BJ (cell line): ENCODE measurements at regions of chr6 and their contacts with region 1.

Region 1: DNA sequence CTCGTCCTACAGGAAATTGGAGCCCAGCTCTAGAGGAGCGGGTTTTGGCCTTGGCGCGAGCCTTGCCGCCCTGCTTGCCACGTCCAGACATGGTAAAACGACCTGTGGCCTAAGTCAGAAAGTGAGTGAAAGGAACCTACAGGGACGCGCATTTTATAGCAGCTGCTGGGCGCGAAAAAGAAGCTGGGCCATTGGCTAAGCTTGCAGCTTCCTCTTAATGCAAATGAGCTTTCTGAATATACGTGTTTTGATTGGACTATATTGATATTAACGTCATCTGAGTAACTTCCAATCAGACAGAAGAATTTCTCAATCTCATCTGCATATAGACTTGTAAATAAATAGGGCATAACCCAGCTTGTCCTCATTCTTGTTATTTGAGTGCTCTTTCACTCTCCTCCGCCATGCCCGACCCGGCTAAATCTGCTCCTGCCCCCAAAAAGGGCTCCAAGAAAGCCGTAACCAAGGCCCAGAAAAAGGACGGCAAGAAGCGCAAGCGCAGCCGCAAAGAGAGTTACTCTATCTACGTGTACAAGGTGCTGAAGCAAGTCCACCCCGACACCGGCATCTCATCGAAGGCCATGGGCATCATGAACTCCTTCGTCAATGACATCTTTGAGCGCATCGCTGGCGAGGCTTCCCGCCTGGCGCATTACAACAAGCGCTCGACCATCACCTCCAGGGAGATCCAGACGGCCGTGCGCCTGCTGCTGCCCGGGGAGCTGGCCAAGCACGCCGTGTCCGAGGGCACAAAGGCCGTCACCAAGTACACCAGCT is 18.9 kb downstream of the OR2B2 start:
- DNase-seq: peak; percentile 98
- H3K4me3 ChIP-seq: peak overlapping the region; percentile 70
- H3K27me3 ChIP-seq: no peaks in the 10 kb centered on the region
- CTCF ChIP-seq: no peak

Region 2: GRCh38 chr6:26045065-26045927 is 1848.0 kb before region 1 on chr6:
- CTCF ChIA-PET with region 1: no interaction called
- POLR2A ChIA-PET with region 1: interaction called, 11 read pairs
- DNase-seq: peak; percentile 87
- H3K4me3 ChIP-seq: peak overlapping the region; percentile 51
- H3K27me3 ChIP-seq: no peaks in the 10 kb centered on the region
- CTCF ChIP-seq: peak; percentile 30; the same call in 1 of the 2 replicates

Region 3: DNA sequence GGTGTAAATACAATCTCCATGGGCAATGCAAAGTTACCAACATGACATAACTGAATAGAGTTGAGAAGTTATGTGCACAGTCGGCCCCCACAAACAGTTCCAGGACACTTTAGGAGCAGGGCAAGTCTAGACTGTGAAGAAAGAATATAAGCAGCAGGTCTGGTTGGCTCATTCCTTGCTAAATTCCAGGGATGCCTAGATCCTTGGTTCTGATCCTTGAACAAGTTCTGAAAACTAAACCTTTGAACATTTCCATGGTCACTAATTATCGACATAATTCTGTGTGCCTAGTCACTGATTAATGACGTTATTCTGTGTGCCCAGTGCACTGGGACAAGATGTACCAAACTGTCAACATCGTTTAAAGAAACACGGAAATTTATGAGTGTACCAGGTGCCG is 432.5 kb before region 1 on chr6:
- CTCF ChIA-PET with region 1: no interaction called
- POLR2A ChIA-PET with region 1: no interaction called
- DNase-seq: no peak
- H3K4me3 ChIP-seq: no peak overlapping the region
- H3K27me3 ChIP-seq: no peaks in the 10 kb centered on the region
- CTCF ChIP-seq: no peak

Region 4: DNA sequence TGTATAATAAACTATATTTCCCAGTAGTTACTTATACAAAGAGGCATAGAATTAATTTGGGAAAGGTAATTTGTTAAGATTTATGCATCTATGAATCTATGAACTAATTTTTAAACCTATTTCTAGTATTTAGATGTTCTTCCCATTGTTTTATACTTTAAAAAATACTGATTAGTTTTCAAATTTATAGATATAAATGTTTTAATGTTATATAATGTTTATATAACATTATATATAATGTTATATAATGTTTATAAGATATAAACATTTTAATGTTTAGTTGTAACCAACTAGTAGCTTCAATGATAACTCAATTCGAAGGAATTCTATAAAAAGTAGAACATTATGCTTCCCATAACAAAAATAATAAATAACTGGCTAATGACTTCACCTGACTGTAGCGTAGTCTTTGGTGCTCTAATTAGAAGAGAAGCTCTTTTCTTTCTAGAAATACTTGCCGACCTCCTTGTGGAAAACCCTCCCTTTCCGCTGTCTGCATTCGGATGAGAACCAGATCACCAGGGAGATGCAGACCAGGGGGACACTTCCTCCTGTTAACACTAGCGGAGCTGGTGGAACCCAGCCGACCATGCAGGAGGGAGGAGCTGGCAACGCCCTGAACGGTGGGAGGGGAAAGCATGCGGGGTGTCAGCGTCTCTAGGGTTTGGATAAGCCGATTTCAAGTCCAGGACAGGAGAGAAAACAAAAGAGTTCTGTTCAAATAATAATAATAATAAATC is 139.4 kb before region 1 on chr6:
- CTCF ChIA-PET with region 1: interaction called, 10 read pairs
- POLR2A ChIA-PET with region 1: interaction called, 3 read pairs
- DNase-seq: peak; percentile 16
- H3K4me3 ChIP-seq: peak overlapping the region; percentile 44
- H3K27me3 ChIP-seq: peaks cover 3% of the 10 kb centered on the region
- CTCF ChIP-seq: peak; percentile 27; the same call in 1 of the 2 replicates

Region 5: GRCh38 chr6:27795697-27796494 is 97.4 kb before region 1 on chr6:
- CTCF ChIA-PET with region 1: interaction called, 43 read pairs
- POLR2A ChIA-PET with region 1: interaction called, 4 read pairs
- DNase-seq: peak; percentile 80
- H3K4me3 ChIP-seq: no peak overlapping the region
- H3K27me3 ChIP-seq: no peaks in the 10 kb centered on the region
- CTCF ChIP-seq: peak; percentile 75

Region 6: DNA sequence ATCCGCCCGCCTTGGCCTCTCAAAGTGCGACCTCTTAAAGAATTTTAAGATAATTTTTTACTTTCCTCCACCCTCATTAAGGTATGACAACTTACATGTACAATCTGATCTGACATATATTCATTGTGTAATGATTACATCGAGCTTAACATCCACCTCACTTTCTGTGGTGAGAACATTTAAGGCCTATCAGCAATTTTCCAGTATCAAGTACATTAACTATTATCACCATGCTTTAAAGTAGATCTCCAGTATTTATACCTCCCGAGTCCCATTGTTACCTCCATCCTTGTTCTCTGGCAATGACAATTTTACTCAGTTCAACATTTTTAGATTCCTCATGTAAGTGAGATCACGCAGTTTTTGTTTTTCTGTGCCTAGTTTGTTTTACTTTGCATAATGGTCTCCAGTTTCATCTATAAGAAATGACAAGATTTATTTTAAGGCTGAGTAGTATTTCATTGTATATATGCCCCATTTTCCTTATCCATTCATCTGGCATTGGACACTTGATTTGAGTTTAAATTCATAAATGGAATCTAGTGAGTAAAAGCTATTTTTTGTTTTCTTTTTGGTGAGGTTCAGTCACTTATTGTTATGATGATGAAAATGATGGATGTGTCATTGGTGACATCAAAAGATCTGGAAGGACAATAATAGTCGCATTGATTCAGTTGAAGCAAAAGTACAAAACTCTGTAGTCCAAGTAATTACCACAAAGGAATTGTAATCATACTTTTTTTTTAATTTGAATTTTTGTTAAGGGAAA is 68.0 kb before region 1 on chr6:
- CTCF ChIA-PET with region 1: interaction called, 120 read pairs
- POLR2A ChIA-PET with region 1: interaction called, 31 read pairs
- DNase-seq: no peak
- H3K4me3 ChIP-seq: peak overlapping the region; percentile 75
- H3K27me3 ChIP-seq: no peaks in the 10 kb centered on the region
- CTCF ChIP-seq: no peak

Region 7: GRCh38 chr6:27864906-27865849 is 28.1 kb before region 1 on chr6:
- CTCF ChIA-PET with region 1: interaction called, 6 read pairs
- POLR2A ChIA-PET with region 1: interaction called, 12 read pairs
- DNase-seq: peak; percentile 93
- H3K4me3 ChIP-seq: peak overlapping the region; percentile 60
- H3K27me3 ChIP-seq: no peaks in the 10 kb centered on the region
- CTCF ChIP-seq: no peak

Region 8: GRCh38 chr6:27922949-27923348 is 29.7 kb after region 1 on chr6:
- CTCF ChIA-PET with region 1: no interaction called
- POLR2A ChIA-PET with region 1: no interaction called
- DNase-seq: no peak
- H3K4me3 ChIP-seq: no peak overlapping the region
- H3K27me3 ChIP-seq: no peaks in the 10 kb centered on the region
- CTCF ChIP-seq: no peak

Region 9: DNA sequence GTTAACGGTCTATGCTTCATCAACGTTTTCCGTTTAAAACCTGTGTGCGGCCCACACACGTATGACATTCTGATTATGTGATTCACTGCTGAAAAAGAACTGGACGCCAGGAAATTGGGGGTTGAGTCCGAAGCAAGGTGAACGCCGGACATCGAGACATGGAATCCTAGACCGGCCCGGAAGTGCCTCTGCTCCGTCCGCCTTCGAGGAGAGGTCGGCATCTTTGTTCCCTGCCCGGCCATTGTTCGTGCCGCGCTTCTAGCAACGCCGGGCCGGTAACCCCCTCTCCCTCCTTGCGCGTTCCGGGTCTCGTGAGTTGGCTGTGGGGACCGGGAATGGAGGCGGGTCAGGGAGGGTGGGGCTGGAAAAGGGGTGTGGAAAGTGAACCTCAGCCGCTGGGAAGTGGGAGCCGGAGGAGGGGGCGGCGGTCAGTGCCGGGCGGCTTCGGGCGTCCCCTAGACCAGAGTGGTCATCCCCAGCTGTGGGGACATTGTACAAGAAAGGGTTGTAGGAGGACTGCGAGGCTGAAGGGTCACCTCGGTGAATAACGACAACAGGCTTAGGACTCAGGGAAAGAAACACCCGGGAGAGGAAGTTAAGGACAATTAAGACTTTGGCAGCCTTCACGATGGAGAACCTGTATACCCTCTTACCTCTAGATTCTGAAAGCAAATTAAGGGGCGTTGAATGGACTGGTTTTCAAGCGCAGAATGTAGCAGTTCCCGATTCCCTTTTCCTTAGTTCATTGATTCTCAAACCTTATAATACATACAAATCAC is 332.0 kb after region 1 on chr6 and contains the start of gene ZSCAN9:
- CTCF ChIA-PET with region 1: no interaction called
- POLR2A ChIA-PET with region 1: no interaction called
- DNase-seq: peak; percentile 38
- H3K4me3 ChIP-seq: peak within 1 kb of the TSS; percentile 87
- H3K27me3 ChIP-seq: no peaks in the 10 kb centered on the region
- CTCF ChIP-seq: no peak
- polyA plus RNA-seq, gene ZSCAN9: 9.9 and 11.7 TPM in 2 replicates